Aorta (tissue), 5 donors: ENCODE measurements at regions of chr20 and their contacts with region 1.

Region 1: GRCh38 chr20:23147964-23148730 is 62.0 kb upstream of the CD93 start:
- DNase-seq: peak; percentile 89
- ATAC-seq: peak; percentile 82
- H3K4me3 ChIP-seq: no peak overlapping the region
- H3K27ac ChIP-seq: peak overlapping the region; percentile 79 to 87
- H3K4me1 ChIP-seq: peaks cover 0 to 2% of the 10 kb centered on the region in 2 donors
- H3K27me3 ChIP-seq: no peaks in the 10 kb centered on the region

Region 2: DNA sequence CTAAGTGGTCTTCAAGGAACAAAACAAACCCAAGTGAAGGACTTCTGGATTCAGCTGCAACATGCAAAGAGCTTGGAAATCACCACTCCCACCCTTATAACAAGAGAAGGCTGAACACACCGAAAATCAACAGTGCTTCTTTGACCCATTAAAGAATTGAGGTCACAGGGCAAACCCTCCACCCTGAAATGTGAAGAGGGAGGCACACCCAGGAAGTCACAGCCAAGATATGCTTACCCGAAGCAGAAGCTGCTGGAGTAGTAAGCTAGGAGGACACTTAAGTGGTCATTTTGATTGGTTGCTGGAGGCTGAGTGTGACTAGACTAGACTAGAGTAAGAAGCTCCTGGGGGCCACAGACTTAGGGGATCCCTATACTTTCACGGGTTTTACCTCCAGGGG is 301.3 kb before region 1 on chr20:
- intact Hi-C with region 1: no loop called
- DNase-seq: no peak
- ATAC-seq: no peak
- H3K4me3 ChIP-seq: no peak overlapping the region
- H3K27ac ChIP-seq: no peak overlapping the region
- H3K4me1 ChIP-seq: no peaks in the 10 kb centered on the region
- H3K27me3 ChIP-seq: no peaks in the 10 kb centered on the region

Region 3: DNA sequence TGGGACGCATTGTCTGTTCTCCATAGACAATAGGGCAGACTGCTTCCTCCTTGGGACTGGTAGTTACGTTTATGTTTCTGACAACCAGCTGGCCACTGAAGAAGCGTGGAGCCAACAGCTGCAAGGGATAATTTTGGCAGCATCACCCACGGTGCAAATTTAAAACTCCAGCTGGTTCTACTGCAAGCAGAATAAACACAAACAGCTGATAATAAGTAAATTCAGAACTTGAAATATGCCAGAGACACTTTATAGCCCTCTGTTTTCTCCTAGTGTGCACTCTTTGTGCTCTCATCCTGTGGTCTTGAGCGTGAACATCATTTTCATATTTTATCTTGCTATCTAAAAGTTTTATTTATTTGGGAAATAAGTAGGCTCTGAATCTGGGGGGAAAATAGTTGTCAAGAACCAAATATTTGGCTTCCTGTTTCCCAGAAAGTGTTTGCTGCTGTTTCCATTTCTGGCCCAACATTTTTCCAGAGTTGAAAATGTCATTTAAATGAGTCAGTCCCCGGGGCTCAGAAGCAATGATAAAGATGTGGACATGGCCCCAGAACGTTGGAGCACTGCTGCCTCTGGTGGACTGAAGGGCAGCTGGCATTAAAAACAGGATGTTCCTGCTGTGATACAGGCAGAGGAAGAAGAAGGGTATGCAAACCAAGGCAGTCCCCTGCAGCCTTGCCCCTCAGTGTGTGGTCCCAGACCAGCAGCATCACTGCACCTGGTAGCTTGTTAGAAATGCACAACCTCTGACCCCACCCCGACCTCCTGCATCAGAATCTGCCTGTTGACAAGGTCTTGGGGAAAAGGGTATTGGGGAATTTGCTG is 86.2 kb before region 1 on chr20:
- intact Hi-C with region 1: loop called (anchors 2 to 5 kb)
- DNase-seq: peak; percentile 75 to 81
- ATAC-seq: peak; percentile 87
- H3K4me3 ChIP-seq: no peak overlapping the region
- H3K27ac ChIP-seq: peak overlapping the region; percentile 91 to 99
- H3K4me1 ChIP-seq: peaks cover 10 to 14% of the 10 kb centered on the region in 2 donors
- H3K27me3 ChIP-seq: no peaks in the 10 kb centered on the region

Region 4: GRCh38 chr20:23086056-23086566 is 62.0 kb before region 1 on chr20 and contains the start of gene CD93:
- intact Hi-C with region 1: loop called (anchors 2 to 5 kb)
- DNase-seq: peak; percentile 72 to 89
- ATAC-seq: peak; percentile 79
- H3K4me3 ChIP-seq: no peak within 1 kb of the TSS
- H3K27ac ChIP-seq: peak within 1 kb of the TSS; percentile 71 to 89
- H3K4me1 ChIP-seq: peaks cover 0 to 2% of the 10 kb centered on the region in 2 donors
- H3K27me3 ChIP-seq: no peaks in the 10 kb centered on the region
- total RNA-seq, gene CD93: 123 to 160 TPM

Region 5: GRCh38 chr20:23257848-23258746 is 110.0 kb after region 1 on chr20:
- intact Hi-C with region 1: loop called in 1 of 2 experiments (anchors 5 kb)
- DNase-seq: no peak
- ATAC-seq: peak; percentile 84
- H3K4me3 ChIP-seq: no peak overlapping the region
- H3K27ac ChIP-seq: peak overlapping the region; percentile 8 to 67
- H3K4me1 ChIP-seq: no peaks in the 10 kb centered on the region
- H3K27me3 ChIP-seq: no peaks in the 10 kb centered on the region